ENCODE measurements at regions of chr11 and their contacts with region 1.

Region 1: GRCh38 chr11:105507496-105508254 is 102.2 kb upstream of the GRIA4 start:
- DNase-seq: no peak
- H3K4me3 ChIP-seq: no peak overlapping the region
- H3K27ac ChIP-seq: no peak overlapping the region
- H3K4me1 ChIP-seq: no peaks in the 10 kb centered on the region
- H3K27me3 ChIP-seq: peaks cover 15% of the 10 kb centered on the region
- CTCF ChIP-seq: no peak

Region 2: GRCh38 chr11:105466582-105467228 is 41.0 kb before region 1 on chr11:
- CTCF ChIA-PET with region 1: no interaction called
- POLR2A ChIA-PET with region 1: no interaction called
- intact Hi-C with region 1: no loop called
- DNase-seq: peak; percentile 43
- H3K4me3 ChIP-seq: no peak overlapping the region
- H3K27ac ChIP-seq: no peak overlapping the region
- H3K4me1 ChIP-seq: no peaks in the 10 kb centered on the region
- H3K27me3 ChIP-seq: peaks cover 6% of the 10 kb centered on the region
- CTCF ChIP-seq: no peak

Region 3: GRCh38 chr11:105490333-105490732 is 17.3 kb before region 1 on chr11:
- CTCF ChIA-PET with region 1: no interaction called
- POLR2A ChIA-PET with region 1: interaction called, 16 read pairs
- intact Hi-C with region 1: no loop called
- DNase-seq: no peak
- H3K4me3 ChIP-seq: no peak overlapping the region
- H3K27ac ChIP-seq: no peak overlapping the region
- H3K4me1 ChIP-seq: no peaks in the 10 kb centered on the region
- H3K27me3 ChIP-seq: peaks cover 22% of the 10 kb centered on the region
- CTCF ChIP-seq: no peak

Region 4: GRCh38 chr11:105840391-105840790 is 332.7 kb after region 1 on chr11:
- CTCF ChIA-PET with region 1: no interaction called
- POLR2A ChIA-PET with region 1: no interaction called
- intact Hi-C with region 1: loop called (anchors 5 kb)
- DNase-seq: peak; percentile 53
- H3K4me3 ChIP-seq: no peak overlapping the region
- H3K27ac ChIP-seq: no peak overlapping the region
- H3K4me1 ChIP-seq: no peaks in the 10 kb centered on the region
- H3K27me3 ChIP-seq: no peaks in the 10 kb centered on the region
- CTCF ChIP-seq: no peak